Ascending aorta (tissue), 2 donors: ENCODE measurements at regions of chr1 and their contacts with region 1.

Region 1: GRCh38 chr1:244835276-244836134 is at the start of gene COX20:
- DNase-seq: peak; percentile 50 to 93
- H3K4me3 ChIP-seq: peak within 1 kb of the TSS; percentile 67 to 76
- H3K27ac ChIP-seq: peak within 1 kb of the TSS; percentile 98 to 99
- H3K4me1 ChIP-seq: peaks cover 0 to 16% of the 10 kb centered on the region in 2 donors
- H3K27me3 ChIP-seq: no peaks in the 10 kb centered on the region
- CTCF ChIP-seq: no peak
- total RNA-seq, gene COX20: 8.2 TPM

Region 2: GRCh38 chr1:244615301-244615700 is 220.2 kb before region 1 on chr1:
- intact Hi-C with region 1: no loop called
- DNase-seq: no peak
- H3K4me3 ChIP-seq: no peak overlapping the region
- H3K27ac ChIP-seq: no peak overlapping the region
- H3K4me1 ChIP-seq: no peaks in the 10 kb centered on the region
- H3K27me3 ChIP-seq: no peaks in the 10 kb centered on the region
- CTCF ChIP-seq: no peak

Region 3: GRCh38 chr1:244730153-244730933 is 105.2 kb before region 1 on chr1:
- intact Hi-C with region 1: loop called (anchors 1 kb)
- DNase-seq: no peak
- H3K4me3 ChIP-seq: peak overlapping the region; percentile 55 to 82
- H3K27ac ChIP-seq: no peak overlapping the region
- H3K4me1 ChIP-seq: no peaks in the 10 kb centered on the region
- H3K27me3 ChIP-seq: no peaks in the 10 kb centered on the region
- CTCF ChIP-seq: no peak

Region 4: DNA sequence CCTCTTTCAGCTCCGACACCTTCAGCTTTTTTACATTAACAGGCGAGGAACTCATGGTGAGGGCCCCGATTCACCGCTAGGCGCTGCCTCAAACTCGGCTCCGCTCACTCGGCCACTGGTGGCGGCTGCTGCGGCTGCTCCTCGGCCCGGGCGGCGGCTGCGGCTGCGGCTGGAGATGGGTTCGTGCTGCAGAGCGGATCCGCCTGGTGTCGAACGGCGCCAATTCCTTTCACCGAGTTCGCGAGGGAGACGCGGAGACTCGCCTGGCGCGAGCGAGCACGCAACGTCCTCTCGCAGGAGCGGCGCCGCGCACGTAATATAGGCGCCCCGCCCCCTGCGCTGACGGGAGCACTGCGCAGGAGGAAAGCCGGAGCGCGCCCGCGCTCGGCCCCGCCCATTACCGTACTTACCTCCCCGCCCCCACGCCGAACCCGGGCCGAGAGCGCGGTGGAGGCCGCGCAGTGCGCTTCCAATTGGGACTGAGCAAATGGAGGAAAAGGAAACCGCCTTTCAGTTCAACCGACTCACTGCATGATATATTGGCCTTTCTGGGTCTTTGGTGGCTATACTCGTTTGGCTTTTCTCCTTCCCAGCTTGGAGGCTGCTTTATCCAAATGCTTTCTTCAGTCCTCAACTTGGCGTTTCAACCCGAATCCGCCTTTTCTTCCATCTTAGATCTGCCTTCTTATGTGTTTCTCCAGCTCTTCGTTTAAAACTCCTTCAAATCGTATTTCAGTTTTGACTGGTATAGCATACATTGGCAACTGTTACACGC is 28.9 kb after region 1 on chr1 and contains the start of gene HNRNPU:
- intact Hi-C with region 1: loop called (anchors 1 kb)
- DNase-seq: peak; percentile 86 to 99
- H3K4me3 ChIP-seq: peak within 1 kb of the TSS; percentile 90 to 100
- H3K27ac ChIP-seq: peak within 1 kb of the TSS; percentile 99 to 100
- H3K4me1 ChIP-seq: peaks cover 11 to 33% of the 10 kb centered on the region in 2 donors
- H3K27me3 ChIP-seq: no peaks in the 10 kb centered on the region
- CTCF ChIP-seq: peak; percentile 18 to 44 (median 41)
- total RNA-seq, gene HNRNPU: 128 TPM

Region 5: GRCh38 chr1:244887281-244887680 is 51.8 kb after region 1 on chr1:
- intact Hi-C with region 1: no loop called
- DNase-seq: no peak
- H3K4me3 ChIP-seq: no peak overlapping the region
- H3K27ac ChIP-seq: no peak overlapping the region
- H3K4me1 ChIP-seq: no peaks in the 10 kb centered on the region
- H3K27me3 ChIP-seq: no peaks in the 10 kb centered on the region
- CTCF ChIP-seq: no peak